H1 (cell line): ENCODE measurements at regions of chrX and their contacts with region 1.

Region 1: GRCh38 chrX:140526171-140526570 is 21.3 kb upstream of the SOX3 start:
- DNase-seq: no peak
- H3K4me3 ChIP-seq: no peak overlapping the region
- H3K27ac ChIP-seq: no peak overlapping the region
- H3K4me1 ChIP-seq: peaks cover 0 to 7% (median 0%) of the 10 kb centered on the region in 4 experiments; a peak in 1 of 7 replicates
- H3K27me3 ChIP-seq: no peaks in the 10 kb centered on the region
- CTCF ChIP-seq: peak; percentile 7 to 47 (median 31)
- EP300 ChIP-seq: no peak
- POLR2A ChIP-seq: no peak
- RAD21 ChIP-seq: peak; percentile 53 to 69

Region 2: DNA sequence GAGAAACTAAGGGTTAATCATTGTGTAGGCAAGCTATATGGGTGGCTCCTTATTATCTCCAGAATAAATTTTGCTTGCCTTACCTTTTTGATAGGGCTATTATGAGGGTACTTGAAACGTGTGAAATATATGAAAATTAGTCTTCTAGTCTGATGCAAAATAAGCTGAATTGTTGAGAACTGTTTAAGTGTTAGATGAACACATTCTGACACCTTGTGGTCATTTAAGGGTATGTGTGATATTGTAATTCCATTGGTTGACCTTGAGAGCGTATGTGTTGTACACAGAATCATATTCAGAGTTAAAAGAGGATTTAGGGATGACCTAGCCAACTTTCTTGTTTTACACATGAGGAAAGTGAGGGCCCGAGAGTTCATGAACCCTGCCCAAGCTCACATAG is 138.8 kb after region 1 on chrX:
- CTCF ChIA-PET with region 1: interaction called, 16 read pairs
- POLR2A ChIA-PET with region 1: no interaction called
- DNase-seq: no peak
- H3K4me3 ChIP-seq: no peak overlapping the region
- H3K27ac ChIP-seq: no peak overlapping the region
- H3K4me1 ChIP-seq: no peaks in the 10 kb centered on the region; a peak in 1 of 7 replicates
- H3K27me3 ChIP-seq: no peaks in the 10 kb centered on the region
- CTCF ChIP-seq: peak in 2 of 3 experiments; percentile 17 to 36; a peak in 2 of 4 replicates
- EP300 ChIP-seq: no peak
- POLR2A ChIP-seq: no peak
- RAD21 ChIP-seq: peak; percentile 54 to 56

Region 3: DNA sequence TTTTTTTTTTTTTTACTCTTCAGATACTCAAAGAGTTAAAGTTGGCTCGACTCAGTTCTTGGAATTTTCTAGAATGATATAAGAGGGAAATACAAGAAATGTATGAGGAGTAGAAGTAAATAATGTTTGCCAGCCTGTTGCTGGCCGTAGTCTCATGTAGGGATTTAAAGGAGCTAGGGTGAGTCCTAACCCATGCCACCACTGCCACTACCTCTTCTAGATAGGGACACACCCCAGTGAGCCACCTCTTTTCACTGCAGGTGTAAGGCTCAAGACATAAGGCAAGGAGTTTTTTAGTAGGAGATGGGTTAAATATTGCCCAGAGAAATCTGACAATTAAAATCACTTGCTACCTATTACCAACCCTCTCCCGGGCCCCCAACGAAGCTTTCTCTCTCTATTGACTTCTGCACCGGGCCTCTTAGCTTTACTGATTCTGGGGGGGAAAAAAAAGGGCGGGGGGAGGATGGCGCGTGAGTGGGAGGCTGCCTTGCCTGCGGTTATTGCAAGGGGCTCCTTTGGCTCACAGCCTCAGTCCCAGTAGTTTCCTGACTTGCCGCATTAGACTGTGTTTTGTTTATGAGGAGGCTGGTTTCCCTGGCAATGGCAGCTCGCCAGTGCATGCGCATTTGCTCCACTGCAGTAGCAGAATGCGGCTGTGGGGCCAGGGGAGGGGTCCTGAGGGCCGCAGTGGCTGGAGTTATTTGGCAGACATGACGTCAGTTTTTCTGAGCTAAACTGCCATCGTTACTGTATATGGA is 186.4 kb after region 1 on chrX:
- CTCF ChIA-PET with region 1: no interaction called
- POLR2A ChIA-PET with region 1: no interaction called
- DNase-seq: peak; percentile 17 to 44
- H3K4me3 ChIP-seq: peak overlapping the region in 1 of 4 experiments; percentile 36; a peak in 1 of 8 replicates
- H3K27ac ChIP-seq: peak overlapping the region; percentile 58; the same call in 1 of the 2 replicates
- H3K4me1 ChIP-seq: no peaks in the 10 kb centered on the region
- H3K27me3 ChIP-seq: no peaks in the 10 kb centered on the region; a peak in 1 of 7 replicates
- CTCF ChIP-seq: no peak
- EP300 ChIP-seq: peak in 1 of 2 experiments; percentile 52; a peak in 1 of 3 replicates
- POLR2A ChIP-seq: peak in 1 of 2 experiments; percentile 40; a peak in 1 of 3 replicates
- RAD21 ChIP-seq: no peak